Endothelial cell of umbilical vein (primary cell): ENCODE measurements at regions of chr16 and their contacts with region 1.

Region 1: DNA sequence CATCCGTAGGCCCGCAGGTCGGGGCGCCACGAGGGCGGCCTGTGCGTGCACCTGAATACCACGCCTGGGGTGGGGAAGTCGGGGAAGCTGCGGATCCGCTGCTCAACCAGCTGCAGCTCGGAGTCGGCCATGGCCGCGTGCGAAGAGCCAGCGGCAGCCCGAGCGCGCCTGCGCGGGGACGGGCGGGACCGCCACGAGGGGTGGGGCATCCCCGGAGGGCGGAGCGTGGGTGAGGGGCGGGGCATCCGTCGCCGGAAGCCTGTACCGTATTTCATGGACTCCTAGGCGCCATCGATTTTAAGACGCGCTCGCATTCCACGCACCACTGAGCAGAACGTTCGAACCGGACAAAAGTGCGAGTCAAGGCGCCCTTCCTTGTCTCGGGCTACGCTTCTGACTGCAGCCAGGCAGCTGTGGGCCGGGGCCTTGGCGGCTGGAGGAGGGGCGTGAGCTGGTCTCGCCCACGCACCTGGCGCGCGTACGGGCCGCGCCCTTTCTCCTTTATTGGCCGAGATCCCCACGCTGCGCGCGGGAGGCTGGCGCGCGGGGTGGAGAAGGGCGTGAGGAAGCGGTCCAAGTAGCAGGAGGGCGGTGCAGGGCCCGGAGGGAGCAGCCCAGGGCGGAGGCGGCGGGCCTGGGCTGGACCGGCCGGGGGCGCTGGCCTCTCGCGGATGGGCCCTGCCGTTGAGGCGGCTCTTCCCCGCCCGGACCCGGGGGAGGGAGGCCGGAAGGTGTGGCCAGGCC is at the start of gene APRT:
- DNase-seq: peak; percentile 94
- H3K4me3 ChIP-seq: peak within 1 kb of the TSS; percentile 42 to 54 (median 52)
- H3K27ac ChIP-seq: peak within 1 kb of the TSS; percentile 49
- H3K4me1 ChIP-seq: peaks cover 17% of the 10 kb centered on the region
- H3K27me3 ChIP-seq: no peaks in the 10 kb centered on the region
- CTCF ChIP-seq: peak; percentile 16 to 37
- POLR2A ChIP-seq: peak; percentile 97
- total RNA-seq, gene APRT: 148 and 152 TPM in 2 replicates

Region 2: DNA sequence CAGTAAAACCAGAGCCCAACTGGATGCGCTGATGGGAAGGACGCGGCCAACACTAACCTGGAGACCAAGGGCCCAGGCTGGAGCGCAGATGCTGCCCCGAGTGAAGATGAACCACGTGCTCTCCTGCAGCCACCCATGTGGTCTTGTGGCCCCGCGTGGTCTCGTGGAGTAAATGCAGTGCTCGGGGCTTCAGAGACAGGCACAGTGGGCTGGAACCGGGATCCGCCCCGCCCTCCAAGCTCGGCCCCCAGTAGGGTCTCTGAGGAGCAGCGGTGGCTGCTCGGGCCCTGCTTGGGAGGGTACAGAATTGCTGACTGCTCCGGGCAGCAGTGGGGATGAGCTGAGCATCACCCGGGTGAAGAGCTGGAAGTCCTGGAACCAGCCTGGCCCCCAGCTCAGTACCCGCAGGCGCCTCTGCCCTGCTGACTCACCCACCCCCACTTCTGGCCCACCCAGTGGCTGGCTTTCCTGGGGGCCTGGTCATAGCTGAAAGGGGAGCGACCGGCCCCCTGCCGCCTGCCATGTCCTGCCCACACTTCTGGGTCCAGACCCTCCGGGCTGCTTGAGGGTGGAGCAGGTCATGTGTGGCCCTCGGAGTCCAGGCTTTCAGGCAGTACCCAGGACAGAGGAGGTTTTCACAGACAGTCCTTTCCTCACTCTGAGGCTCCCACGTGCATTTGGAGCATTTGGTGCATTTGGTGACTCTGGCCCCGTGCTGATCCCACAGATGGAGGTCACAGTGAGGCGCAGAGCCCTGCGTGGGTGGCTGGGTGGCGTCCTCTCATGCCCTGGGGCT is 20.0 kb before region 1 on chr16:
- CTCF ChIA-PET with region 1: no interaction called
- POLR2A ChIA-PET with region 1: no interaction called
- dilution Hi-C with region 1: no loop called
- intact Hi-C with region 1: no loop called
- DNase-seq: no peak
- H3K4me3 ChIP-seq: no peak overlapping the region
- H3K27ac ChIP-seq: no peak overlapping the region
- H3K4me1 ChIP-seq: no peaks in the 10 kb centered on the region
- H3K27me3 ChIP-seq: peaks cover 0 to 4% of the 10 kb centered on the region in 2 experiments
- CTCF ChIP-seq: no peak
- POLR2A ChIP-seq: no peak

Region 3: DNA sequence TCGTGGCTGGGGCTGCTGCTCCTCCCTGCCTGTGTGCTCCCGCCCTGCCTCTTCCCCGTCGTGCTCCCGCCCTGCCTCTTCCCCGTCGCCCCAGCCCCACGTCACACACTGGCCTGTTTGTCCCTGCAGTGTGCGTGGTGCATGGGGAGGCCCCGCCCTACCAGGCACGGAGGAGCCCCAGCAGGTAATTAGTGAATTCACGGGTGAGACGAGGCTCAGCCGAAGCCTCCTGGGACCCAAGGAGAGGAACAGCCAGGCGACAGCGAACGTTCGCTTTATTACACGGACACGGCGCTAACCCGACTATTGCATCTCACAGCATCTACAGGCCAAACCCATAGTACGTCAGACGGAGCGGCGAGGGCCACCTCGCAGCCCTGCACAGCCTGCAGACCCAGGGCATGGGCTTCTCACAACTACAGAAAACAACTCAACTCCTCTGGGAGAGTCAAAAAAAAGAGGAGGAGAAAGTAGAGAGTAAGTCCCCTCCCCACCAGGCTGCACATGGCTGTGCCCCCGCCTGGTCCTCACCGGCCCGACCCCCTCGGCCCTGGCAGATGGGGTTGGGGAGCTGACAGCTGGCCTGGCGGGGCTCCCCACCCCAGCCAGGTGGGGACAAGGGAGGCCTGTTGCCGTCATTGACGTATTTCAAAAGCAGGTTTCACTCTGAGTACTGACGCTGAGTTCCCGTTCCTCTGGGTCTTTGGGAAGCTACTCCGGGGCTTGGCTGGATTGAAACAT is 58.8 kb after region 1 on chr16:
- CTCF ChIA-PET with region 1: no interaction called
- POLR2A ChIA-PET with region 1: no interaction called
- dilution Hi-C with region 1: no loop called
- intact Hi-C with region 1: no loop called
- DNase-seq: no peak
- H3K4me3 ChIP-seq: no peak overlapping the region
- H3K27ac ChIP-seq: no peak overlapping the region
- H3K4me1 ChIP-seq: no peaks in the 10 kb centered on the region
- H3K27me3 ChIP-seq: no peaks in the 10 kb centered on the region
- CTCF ChIP-seq: no peak
- POLR2A ChIP-seq: no peak

Region 4: DNA sequence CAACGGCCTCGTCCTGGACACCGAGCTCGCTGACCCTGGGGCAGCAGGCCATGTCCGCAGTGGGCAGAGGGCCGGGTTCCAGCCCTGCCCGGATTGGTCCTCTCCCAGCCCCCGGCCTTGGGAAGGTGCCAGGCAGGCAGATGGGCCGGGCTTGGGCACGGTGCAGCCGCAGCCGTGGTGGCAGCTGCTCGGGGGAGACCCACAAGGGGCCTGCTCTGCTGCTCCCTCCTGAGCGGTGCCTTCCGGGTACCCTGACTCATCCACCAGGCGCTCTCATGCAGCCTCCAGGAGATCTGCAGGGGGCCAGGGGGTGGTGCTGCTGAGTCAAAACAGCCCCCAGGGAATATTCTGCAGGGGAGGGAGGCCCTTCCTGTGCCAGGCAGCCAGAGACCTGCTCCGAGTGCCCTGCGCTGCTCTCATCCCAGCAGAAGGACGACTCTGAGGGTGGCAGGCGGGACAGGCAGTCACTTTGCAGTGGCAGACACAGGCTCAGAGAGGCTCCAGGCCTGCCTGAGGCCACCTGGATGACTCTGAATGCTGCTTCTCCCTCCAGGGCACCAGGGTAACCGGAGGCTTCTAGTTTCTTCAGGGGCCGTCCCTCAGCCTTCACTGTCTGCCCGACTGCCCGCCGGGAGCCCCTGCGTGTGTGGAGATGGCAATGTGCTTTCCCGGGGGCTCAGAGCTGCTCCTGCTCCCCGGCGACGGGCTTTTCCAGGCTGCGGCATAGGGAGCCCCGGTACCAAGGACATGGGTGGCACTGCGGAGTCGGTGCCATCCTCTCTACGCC is 113.4 kb after region 1 on chr16:
- CTCF ChIA-PET with region 1: no interaction called
- POLR2A ChIA-PET with region 1: no interaction called
- dilution Hi-C with region 1: no loop called
- intact Hi-C with region 1: loop called (anchors 5 kb)
- DNase-seq: peak; percentile 67
- H3K4me3 ChIP-seq: no peak overlapping the region
- H3K27ac ChIP-seq: no peak overlapping the region
- H3K4me1 ChIP-seq: peaks cover 27% of the 10 kb centered on the region
- H3K27me3 ChIP-seq: no peaks in the 10 kb centered on the region
- CTCF ChIP-seq: peak; percentile 62 to 64
- POLR2A ChIP-seq: peak; percentile 24